ENCODE measurements at regions of chr16 and their contacts with region 1.

Region 1: DNA sequence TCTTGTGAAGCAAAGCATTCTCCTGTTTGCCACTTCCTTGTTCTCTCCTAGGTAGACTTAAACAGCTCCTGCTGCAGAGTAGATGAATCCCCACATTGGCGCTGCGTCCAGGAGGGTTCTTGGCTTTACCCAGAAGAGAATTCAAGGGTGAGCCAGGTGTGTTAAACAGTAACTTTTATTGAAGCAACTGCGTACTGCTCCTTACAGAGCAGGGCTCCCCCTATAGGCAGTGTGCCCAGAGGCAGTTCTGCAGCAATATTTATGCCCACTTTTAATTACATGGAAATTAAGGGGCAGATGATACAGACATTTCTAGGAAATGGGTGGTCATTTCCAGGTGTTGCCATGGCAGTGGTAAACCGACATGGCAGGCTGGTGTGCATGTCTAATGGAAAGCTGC is 987.6 kb upstream of the RBFOX1 start:
- DNase-seq: no peak
- ATAC-seq: no peak
- H3K4me3 ChIP-seq: no peak overlapping the region
- H3K4me3 Mint-ChIP-seq: no peak overlapping the region
- H3K27ac ChIP-seq: no peak overlapping the region
- H3K27ac Mint-ChIP-seq: no peak overlapping the region
- H3K4me1 ChIP-seq: no peaks in the 10 kb centered on the region
- H3K4me1 Mint-ChIP-seq: no peaks in the 10 kb centered on the region
- H3K27me3 ChIP-seq: no peaks in the 10 kb centered on the region
- H3K27me3 Mint-ChIP-seq: no peaks in the 10 kb centered on the region
- CTCF ChIP-seq: no peak

Region 2: GRCh38 chr16:5693426-5693825 is 651.7 kb before region 1 on chr16:
- CTCF ChIA-PET with region 1: no interaction called
- POLR2A ChIA-PET with region 1: no interaction called
- intact Hi-C with region 1: no loop called
- DNase-seq: no peak
- ATAC-seq: no peak
- H3K4me3 ChIP-seq: no peak overlapping the region
- H3K4me3 Mint-ChIP-seq: no peak overlapping the region
- H3K27ac ChIP-seq: no peak overlapping the region
- H3K27ac Mint-ChIP-seq: no peak overlapping the region
- H3K4me1 ChIP-seq: no peaks in the 10 kb centered on the region
- H3K4me1 Mint-ChIP-seq: no peaks in the 10 kb centered on the region
- H3K27me3 ChIP-seq: no peaks in the 10 kb centered on the region
- H3K27me3 Mint-ChIP-seq: no peaks in the 10 kb centered on the region
- CTCF ChIP-seq: no peak

Region 3: DNA sequence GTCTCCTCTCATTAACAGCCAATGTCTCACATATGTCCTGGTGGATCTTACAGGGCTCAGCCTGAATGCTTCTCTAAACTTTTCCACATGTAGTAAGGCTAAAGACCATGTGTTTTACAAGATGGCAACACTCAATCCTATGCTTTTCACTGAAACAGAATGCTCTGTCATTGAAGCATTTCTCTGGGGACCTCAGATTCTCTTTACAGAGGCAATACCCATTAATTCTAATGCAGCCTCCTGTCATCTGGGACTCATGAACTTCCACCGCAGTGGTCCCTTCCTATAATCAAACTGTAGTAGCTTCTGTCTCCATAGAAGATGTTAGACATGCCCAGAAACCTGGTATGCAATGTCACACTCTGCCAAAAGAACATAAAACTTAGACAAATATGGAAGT is 60.9 kb after region 1 on chr16:
- CTCF ChIA-PET with region 1: no interaction called
- POLR2A ChIA-PET with region 1: no interaction called
- intact Hi-C with region 1: loop called in 1 of 2 experiments (anchors 10 kb)
- DNase-seq: no peak
- ATAC-seq: no peak
- H3K4me3 ChIP-seq: no peak overlapping the region
- H3K4me3 Mint-ChIP-seq: no peak overlapping the region
- H3K27ac ChIP-seq: no peak overlapping the region
- H3K27ac Mint-ChIP-seq: no peak overlapping the region
- H3K4me1 ChIP-seq: no peaks in the 10 kb centered on the region
- H3K4me1 Mint-ChIP-seq: no peaks in the 10 kb centered on the region
- H3K27me3 ChIP-seq: no peaks in the 10 kb centered on the region
- H3K27me3 Mint-ChIP-seq: no peaks in the 10 kb centered on the region
- CTCF ChIP-seq: no peak